ENCODE measurements at regions of chr11 and their contacts with region 1.

Region 1: GRCh38 chr11:47259178-47259977 is 1.6 kb downstream of the NR1H3 start:
- DNase-seq: no peak
- ATAC-seq: peak; percentile 82
- H3K4me3 ChIP-seq: no peak overlapping the region
- H3K27ac ChIP-seq: 0 out of 2 replicates have a peak overlapping the region, but pooled peaks have one; percentile 11
- H3K4me1 ChIP-seq: peaks cover 31% of the 10 kb centered on the region
- H3K27me3 ChIP-seq: no peaks in the 10 kb centered on the region
- CTCF ChIP-seq: peak; percentile 87

Region 2: DNA sequence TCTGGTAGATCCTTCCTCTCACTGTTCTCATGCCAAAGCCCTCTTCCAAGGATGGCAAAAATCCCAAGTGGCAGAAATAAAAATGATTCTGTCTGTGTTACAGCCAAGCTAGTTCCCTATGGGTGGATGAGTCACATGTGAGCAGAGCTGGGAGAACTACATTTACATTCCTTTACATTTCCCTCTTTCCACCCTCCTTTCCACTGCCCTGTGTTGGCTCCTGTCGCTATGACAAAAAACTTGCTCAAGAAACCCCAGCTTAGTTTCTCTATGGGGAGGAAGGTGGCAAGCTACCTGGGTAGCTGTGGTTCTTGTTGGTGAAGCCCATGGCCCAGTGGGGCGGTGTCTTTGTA is 54.8 kb before region 1 on chr11:
- CTCF ChIA-PET with region 1: interaction called, 11 read pairs
- POLR2A ChIA-PET with region 1: no interaction called
- in situ Hi-C with region 1: no loop called
- intact Hi-C with region 1: no loop called
- DNase-seq: no peak
- ATAC-seq: peak; percentile 62
- H3K4me3 ChIP-seq: no peak overlapping the region
- H3K27ac ChIP-seq: no peak overlapping the region
- H3K4me1 ChIP-seq: no peaks in the 10 kb centered on the region
- H3K27me3 ChIP-seq: no peaks in the 10 kb centered on the region
- CTCF ChIP-seq: no peak

Region 3: GRCh38 chr11:47233989-47234668 is 25.2 kb before region 1 on chr11:
- CTCF ChIA-PET with region 1: interaction called, 11 read pairs
- POLR2A ChIA-PET with region 1: no interaction called
- in situ Hi-C with region 1: no loop called
- intact Hi-C with region 1: no loop called
- DNase-seq: peak; percentile 86
- ATAC-seq: peak; percentile 84
- H3K4me3 ChIP-seq: peak overlapping the region; percentile 22 to 51
- H3K27ac ChIP-seq: peak overlapping the region; percentile 83
- H3K4me1 ChIP-seq: peaks cover 20% of the 10 kb centered on the region
- H3K27me3 ChIP-seq: no peaks in the 10 kb centered on the region
- CTCF ChIP-seq: peak; percentile 81; the same call in 1 of the 2 replicates

Region 4: DNA sequence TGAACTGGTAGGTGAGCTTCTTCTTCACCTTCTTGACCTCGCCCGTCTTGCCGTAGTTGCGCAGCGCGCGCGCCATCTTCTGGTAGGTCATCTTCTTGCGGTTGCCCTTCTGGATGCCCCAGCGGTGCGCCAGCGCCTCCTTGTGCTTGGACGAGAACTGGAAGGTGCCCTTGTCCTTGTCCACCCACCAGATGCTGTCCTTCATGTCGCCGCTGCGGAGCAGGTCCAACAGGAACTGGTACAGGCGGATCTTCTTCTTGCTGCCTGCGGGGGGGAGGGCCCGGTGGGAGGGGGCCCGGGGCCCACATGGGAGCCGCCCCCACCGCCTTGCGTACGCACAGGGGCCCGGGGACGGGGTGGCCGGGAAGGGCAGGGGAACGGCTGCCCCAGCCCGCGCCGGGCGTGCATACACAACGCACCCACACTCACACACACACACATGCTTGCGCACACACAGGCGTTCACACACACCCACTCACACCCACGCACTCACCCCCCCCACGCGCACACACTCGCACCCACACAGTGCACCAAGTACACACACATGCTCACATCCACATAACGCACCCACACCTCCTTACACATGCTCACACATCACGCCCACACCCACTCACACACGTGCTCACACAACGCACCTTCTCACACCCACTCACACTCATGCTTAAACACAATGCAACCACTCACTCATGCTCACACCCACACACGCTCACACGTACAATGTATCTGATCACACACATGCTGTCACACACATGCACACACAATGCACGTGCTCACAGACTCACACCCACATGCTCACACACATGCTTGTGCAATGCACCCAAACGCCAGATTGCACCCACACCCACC is 96.1 kb after region 1 on chr11:
- CTCF ChIA-PET with region 1: interaction called, 4 read pairs
- POLR2A ChIA-PET with region 1: no interaction called
- in situ Hi-C with region 1: no loop called
- intact Hi-C with region 1: loop called (anchors 10 kb)
- DNase-seq: peak; percentile 79
- ATAC-seq: peak; percentile 96
- H3K4me3 ChIP-seq: peak overlapping the region; percentile 19 to 36
- H3K27ac ChIP-seq: no peak overlapping the region
- H3K4me1 ChIP-seq: no peaks in the 10 kb centered on the region
- H3K27me3 ChIP-seq: no peaks in the 10 kb centered on the region
- CTCF ChIP-seq: peak; percentile 100

Region 5: GRCh38 chr11:47819743-47820142 is 560.4 kb after region 1 on chr11:
- CTCF ChIA-PET with region 1: no interaction called
- POLR2A ChIA-PET with region 1: no interaction called
- in situ Hi-C with region 1: no loop called
- intact Hi-C with region 1: no loop called
- DNase-seq: no peak
- ATAC-seq: no peak
- H3K4me3 ChIP-seq: no peak overlapping the region
- H3K27ac ChIP-seq: no peak overlapping the region
- H3K4me1 ChIP-seq: no peaks in the 10 kb centered on the region
- H3K27me3 ChIP-seq: no peaks in the 10 kb centered on the region
- CTCF ChIP-seq: no peak

Measured in Panc1 (cell line).